AG04450 (cell line): ENCODE measurements at regions of chr12 and their contacts with region 1.

Region 1: DNA sequence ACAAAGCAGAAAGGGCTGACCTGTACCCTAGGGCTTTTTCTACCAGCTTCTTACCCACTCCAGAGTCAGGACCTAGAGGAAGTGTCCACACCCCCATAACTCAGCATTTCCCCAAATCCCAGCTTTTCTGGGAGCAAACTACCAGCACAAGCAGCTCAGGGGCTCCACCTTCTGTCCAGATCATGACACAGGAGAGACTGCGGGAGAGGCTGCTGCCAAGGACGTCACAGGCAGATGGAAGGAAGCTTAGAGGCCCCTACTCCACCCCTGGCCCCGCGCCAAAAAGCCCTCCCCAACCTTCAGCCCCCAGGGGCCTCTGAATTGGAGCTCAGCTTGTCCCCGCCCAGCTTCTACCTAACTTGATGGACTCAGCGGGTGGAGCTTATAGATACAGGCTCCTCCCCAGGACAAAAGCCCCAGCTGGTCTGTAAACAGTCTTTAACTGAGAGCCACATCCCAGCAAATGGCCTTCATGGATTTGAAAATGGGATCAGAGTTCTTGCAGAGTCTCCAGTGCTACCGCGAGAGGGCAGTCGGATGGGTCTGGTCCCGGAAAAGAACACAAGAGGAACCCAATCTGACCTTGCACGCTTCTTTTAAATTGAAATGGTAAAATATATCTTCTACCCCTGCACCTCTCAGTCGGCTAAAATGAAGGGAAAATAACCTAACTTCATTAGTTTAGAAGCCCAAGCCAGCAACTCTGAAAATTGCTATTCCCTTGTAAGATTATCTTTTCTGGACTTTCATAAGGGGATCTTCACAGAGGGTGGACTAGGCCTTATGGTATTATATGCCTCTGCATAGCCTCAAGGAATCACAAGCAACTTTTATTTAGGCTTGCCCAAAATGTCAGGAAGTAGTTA is 6.8 kb upstream of the BAZ2A start:
- DNase-seq: peak; percentile 100
- H3K4me3 ChIP-seq: peak overlapping the region; percentile 81
- H3K27ac ChIP-seq: peak overlapping the region; percentile 87
- H3K27me3 ChIP-seq: no peaks in the 10 kb centered on the region
- CTCF ChIP-seq: peak; percentile 72

Region 2: DNA sequence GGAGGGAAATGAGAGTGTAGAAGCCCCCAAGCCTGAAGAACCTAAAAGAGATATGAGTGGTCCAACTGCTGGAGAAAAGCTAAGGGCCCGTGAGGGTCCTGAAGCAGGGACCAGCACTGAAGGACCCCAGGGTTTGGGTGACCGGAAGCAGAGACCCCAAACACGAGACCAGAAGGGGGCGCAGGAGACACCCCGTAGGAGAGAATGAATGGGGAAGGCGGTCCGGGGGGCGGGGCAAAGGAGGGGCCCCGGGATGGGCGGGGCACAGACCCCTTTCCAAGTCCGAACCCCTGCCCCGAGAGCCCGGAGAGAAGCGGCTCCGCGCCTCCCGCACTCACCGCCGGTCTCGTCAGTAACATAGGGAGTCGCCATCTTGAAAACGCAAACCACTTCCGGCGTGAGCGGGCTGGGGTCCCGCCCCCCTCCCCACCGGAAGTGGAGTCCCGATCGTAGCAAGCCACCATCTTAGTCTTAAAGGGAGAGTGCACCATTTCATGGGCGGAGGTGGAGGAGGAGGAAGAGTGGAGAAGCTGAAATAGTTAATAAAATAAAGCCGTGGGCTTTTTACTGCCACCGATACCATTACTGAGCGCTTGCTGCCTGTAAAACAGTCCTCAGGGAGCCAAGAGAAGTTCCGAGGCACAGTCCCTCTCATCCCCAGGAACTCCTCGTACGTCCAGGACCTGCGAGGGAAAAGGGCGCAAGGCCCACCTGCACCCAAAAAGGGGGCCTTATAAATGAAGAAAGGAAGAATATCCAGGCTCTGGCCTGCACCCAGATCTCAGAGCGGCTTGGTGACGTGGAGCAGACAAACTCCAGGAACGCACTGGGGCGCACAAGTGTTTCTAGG is 709.9 kb before region 1 on chr12:
- CTCF ChIA-PET with region 1: no interaction called
- POLR2A ChIA-PET with region 1: interaction called, 12 read pairs
- DNase-seq: peak; percentile 74
- H3K4me3 ChIP-seq: peak overlapping the region; percentile 97
- H3K27ac ChIP-seq: peak overlapping the region; percentile 93
- H3K27me3 ChIP-seq: no peaks in the 10 kb centered on the region
- CTCF ChIP-seq: peak; percentile 86

Region 3: DNA sequence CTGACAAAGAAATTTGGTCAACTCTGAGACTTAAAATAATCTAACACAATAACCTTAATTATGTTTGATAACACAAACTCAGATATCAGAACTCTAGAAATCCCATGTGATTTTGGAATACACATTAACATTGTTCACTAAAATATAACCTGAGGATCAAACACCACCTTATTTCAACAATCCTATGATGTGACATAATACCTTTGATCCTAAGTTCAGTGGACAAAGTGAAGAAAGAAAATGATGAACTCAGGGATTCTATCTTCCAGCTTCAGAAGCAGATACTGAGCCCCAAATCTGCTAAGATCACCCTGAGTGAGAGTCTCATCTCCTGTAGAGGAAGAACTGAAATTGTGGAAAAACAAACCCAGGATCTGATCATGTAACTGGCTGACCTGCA is 238.6 kb before region 1 on chr12:
- CTCF ChIA-PET with region 1: no interaction called
- POLR2A ChIA-PET with region 1: no interaction called
- DNase-seq: no peak
- H3K4me3 ChIP-seq: no peak overlapping the region
- H3K27ac ChIP-seq: no peak overlapping the region
- H3K27me3 ChIP-seq: peaks cover 4% of the 10 kb centered on the region
- CTCF ChIP-seq: no peak

Region 4: GRCh38 chr12:56601503-56601902 is 35.4 kb before region 1 on chr12:
- CTCF ChIA-PET with region 1: interaction called, 16 read pairs
- POLR2A ChIA-PET with region 1: no interaction called
- DNase-seq: no peak
- H3K4me3 ChIP-seq: no peak overlapping the region
- H3K27ac ChIP-seq: no peak overlapping the region
- H3K27me3 ChIP-seq: no peaks in the 10 kb centered on the region
- CTCF ChIP-seq: peak; percentile 36

Region 5: GRCh38 chr12:56622535-56622934 is 14.4 kb before region 1 on chr12:
- CTCF ChIA-PET with region 1: interaction called, 46 read pairs
- POLR2A ChIA-PET with region 1: interaction called, 6 read pairs
- DNase-seq: no peak
- H3K4me3 ChIP-seq: no peak overlapping the region
- H3K27ac ChIP-seq: no peak overlapping the region
- H3K27me3 ChIP-seq: no peaks in the 10 kb centered on the region
- CTCF ChIP-seq: no peak

Region 6: GRCh38 chr12:56677680-56678079 is 40.8 kb after region 1 on chr12:
- CTCF ChIA-PET with region 1: interaction called, 12 read pairs
- POLR2A ChIA-PET with region 1: interaction called, 8 read pairs
- DNase-seq: no peak
- H3K4me3 ChIP-seq: no peak overlapping the region
- H3K27ac ChIP-seq: no peak overlapping the region
- H3K27me3 ChIP-seq: no peaks in the 10 kb centered on the region
- CTCF ChIP-seq: no peak

Region 7: GRCh38 chr12:56709759-56710376 is 73.0 kb after region 1 on chr12:
- CTCF ChIA-PET with region 1: interaction called, 13 read pairs
- POLR2A ChIA-PET with region 1: no interaction called
- DNase-seq: no peak
- H3K4me3 ChIP-seq: no peak overlapping the region
- H3K27ac ChIP-seq: no peak overlapping the region
- H3K27me3 ChIP-seq: no peaks in the 10 kb centered on the region
- CTCF ChIP-seq: no peak

Region 8: GRCh38 chr12:57005980-57006808 is 369.3 kb after region 1 on chr12 and contains the start of gene ZBTB39:
- CTCF ChIA-PET with region 1: interaction called, 11 read pairs
- POLR2A ChIA-PET with region 1: no interaction called
- DNase-seq: no peak
- H3K4me3 ChIP-seq: peak within 1 kb of the TSS; percentile 79
- H3K27ac ChIP-seq: peak within 1 kb of the TSS; percentile 57
- H3K27me3 ChIP-seq: no peaks in the 10 kb centered on the region
- CTCF ChIP-seq: peak; percentile 46
- polyA plus RNA-seq, gene ZBTB39: 5.8 and 6.4 TPM in 2 replicates